ENCODE measurements at regions of chr9 and their contacts with region 1.

Region 1: GRCh38 chr9:128034821-128035764 is 32.0 kb downstream of the NAIF1 start:
- DNase-seq: peak; percentile 89 to 91
- ATAC-seq: peak; percentile 97 to 98
- H3K4me3 ChIP-seq: no peak overlapping the region
- H3K27ac ChIP-seq: peak overlapping the region; percentile 61 to 87
- H3K4me1 ChIP-seq: peaks cover 5% of the 10 kb centered on the region; the same call in 1 of the 3 replicates
- CTCF ChIP-seq: peak; percentile 87
- EP300 ChIP-seq: no peak
- POLR2A ChIP-seq: no peak
- RAD21 ChIP-seq: peak; percentile 97 to 99

Region 2: DNA sequence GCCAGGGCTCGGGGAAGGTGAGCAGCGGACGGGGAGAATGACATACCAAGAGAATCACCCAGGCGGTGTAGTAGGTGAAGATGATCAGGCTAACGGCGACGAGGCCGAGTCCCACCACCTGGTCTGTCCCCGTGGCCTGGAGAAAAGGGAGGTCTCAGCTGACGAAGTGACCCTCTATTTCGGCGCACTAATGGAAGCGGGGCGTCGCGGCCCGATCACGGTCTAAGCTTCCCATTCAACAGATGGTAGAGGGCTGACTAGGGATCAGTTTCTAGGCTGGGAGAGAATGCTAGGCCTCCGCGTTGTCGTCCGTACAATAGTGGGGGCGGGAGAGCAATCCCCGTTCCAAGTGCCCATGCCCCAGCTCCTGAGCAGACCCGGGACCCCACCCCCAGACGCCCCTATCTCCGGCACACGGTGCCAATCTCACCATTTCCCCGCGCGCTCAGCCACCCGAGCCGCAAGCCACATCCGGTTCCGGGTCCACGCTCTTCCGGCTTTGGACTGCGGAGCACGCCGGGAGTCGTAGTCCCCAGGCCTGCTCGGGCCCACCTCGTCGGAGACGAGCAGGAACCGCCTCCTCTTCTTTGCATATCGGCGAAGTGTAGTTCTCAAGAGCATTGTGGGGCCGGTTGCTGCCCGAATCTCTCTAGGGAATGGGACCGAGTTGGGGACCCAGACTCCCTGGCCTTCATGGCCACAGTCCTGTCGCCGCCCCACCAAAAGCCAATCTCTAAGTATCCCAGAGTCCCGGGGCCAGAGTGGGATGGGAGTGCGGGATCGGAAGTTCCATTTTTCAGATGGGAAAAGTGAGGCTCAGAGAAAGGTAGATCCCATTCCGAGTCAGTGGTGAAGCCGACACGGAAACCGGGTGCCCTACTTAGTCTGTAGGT is 97.5 kb before region 1 on chr9 and contains the start of gene DPM2:
- CTCF ChIA-PET with region 1: interaction called, 827 read pairs
- POLR2A ChIA-PET with region 1: interaction called, 3 read pairs
- DNase-seq: peak; percentile 89 to 93
- ATAC-seq: peak; percentile 79 to 91
- H3K4me3 ChIP-seq: peak within 1 kb of the TSS; percentile 61
- H3K27ac ChIP-seq: peak within 1 kb of the TSS; percentile 80 to 92
- H3K4me1 ChIP-seq: peaks cover 34% of the 10 kb centered on the region
- CTCF ChIP-seq: no peak
- EP300 ChIP-seq: no peak
- POLR2A ChIP-seq: peak; percentile 44; the same call in 1 of the 2 replicates
- RAD21 ChIP-seq: no peak
- polyA plus RNA-seq, gene DPM2: 41.9 and 48.8 TPM in 2 replicates

Region 3: GRCh38 chr9:127980706-127981558 is 54.2 kb before region 1 on chr9 and contains the start of gene EEIG1:
- CTCF ChIA-PET with region 1: interaction called, 157 read pairs
- POLR2A ChIA-PET with region 1: interaction called, 3 read pairs
- DNase-seq: peak; percentile 85 to 88
- ATAC-seq: peak; percentile 85 to 94
- H3K4me3 ChIP-seq: peak within 1 kb of the TSS; percentile 91
- H3K27ac ChIP-seq: peak within 1 kb of the TSS; percentile 97 to 98
- H3K4me1 ChIP-seq: peaks cover 44% of the 10 kb centered on the region
- CTCF ChIP-seq: no peak
- EP300 ChIP-seq: no peak
- POLR2A ChIP-seq: peak; percentile 78
- RAD21 ChIP-seq: peak in 1 of 2 experiments; percentile 10; a peak in 1 of 5 replicates
- polyA plus RNA-seq, gene EEIG1: 24.4 and 30.3 TPM in 2 replicates

Region 4: GRCh38 chr9:128001779-128002298 is 33.3 kb before region 1 on chr9:
- CTCF ChIA-PET with region 1: interaction called, 15 read pairs
- POLR2A ChIA-PET with region 1: no interaction called
- DNase-seq: peak; percentile 80 to 96
- ATAC-seq: peak; percentile 94 to 97
- H3K4me3 ChIP-seq: no peak overlapping the region
- H3K27ac ChIP-seq: peak overlapping the region; percentile 90 to 91
- H3K4me1 ChIP-seq: peaks cover 42% of the 10 kb centered on the region
- CTCF ChIP-seq: no peak
- EP300 ChIP-seq: peak; percentile 29 to 53; a peak in 2 of 5 replicates
- POLR2A ChIP-seq: peak; percentile 19; the same call in 1 of the 2 replicates
- RAD21 ChIP-seq: peak in 1 of 2 experiments; percentile 35; a peak in 2 of 5 replicates

Region 5: DNA sequence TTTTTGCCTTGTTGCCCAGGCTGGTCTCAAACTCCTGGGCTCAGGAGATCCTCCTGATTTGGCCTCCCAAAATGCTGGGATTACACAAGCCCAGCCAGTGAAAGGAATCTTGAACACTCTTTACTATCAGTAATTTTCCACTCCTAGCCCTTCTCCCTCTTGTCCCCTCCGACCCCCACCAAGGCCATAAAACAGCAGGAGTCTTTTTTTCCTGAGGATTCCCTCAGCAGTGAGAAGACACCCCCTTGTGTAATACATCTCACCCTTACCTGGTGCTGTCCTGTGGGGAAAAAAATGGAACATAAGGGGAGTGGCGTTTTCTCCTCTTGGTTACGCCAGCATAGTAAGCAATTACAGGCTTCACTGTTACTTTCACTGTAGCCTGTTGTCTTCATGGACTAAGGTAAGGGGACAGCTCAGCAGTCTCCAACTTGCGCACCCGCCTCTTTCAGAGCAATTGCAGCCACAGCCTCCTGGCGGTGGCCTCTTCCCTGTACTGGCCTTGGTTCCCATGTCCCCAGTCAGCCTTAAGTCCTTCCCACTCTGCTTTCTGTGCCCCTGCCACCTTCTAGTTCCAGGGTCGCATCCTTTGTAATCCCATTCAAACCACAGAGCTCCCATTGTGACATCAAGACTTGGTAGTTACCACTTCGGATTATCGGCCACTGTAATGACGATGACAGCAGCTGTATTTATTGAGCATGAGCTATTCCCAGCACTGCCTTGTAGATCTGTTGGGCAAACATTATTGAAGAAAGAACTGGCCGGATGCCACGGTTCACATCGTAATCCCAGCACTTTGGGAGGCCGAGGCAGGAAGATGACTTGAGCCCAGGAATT is 22.0 kb after region 1 on chr9:
- CTCF ChIA-PET with region 1: interaction called, 92 read pairs
- POLR2A ChIA-PET with region 1: no interaction called
- DNase-seq: no peak
- ATAC-seq: peak; percentile 48; a peak in 3 of 6 replicates
- H3K4me3 ChIP-seq: no peak overlapping the region
- H3K27ac ChIP-seq: peak overlapping the region; percentile 25 to 32; a peak in 1 of 6 replicates
- H3K4me1 ChIP-seq: peaks cover 20% of the 10 kb centered on the region
- CTCF ChIP-seq: no peak
- EP300 ChIP-seq: no peak
- POLR2A ChIP-seq: no peak
- RAD21 ChIP-seq: no peak

Region 6: GRCh38 chr9:128088253-128088945 is 53.3 kb after region 1 on chr9:
- CTCF ChIA-PET with region 1: interaction called, 11 read pairs
- POLR2A ChIA-PET with region 1: no interaction called
- DNase-seq: no peak
- ATAC-seq: no peak
- H3K4me3 ChIP-seq: no peak overlapping the region
- H3K27ac ChIP-seq: no peak overlapping the region
- H3K4me1 ChIP-seq: peaks cover 7% of the 10 kb centered on the region; the same call in 2 of the 3 replicates
- CTCF ChIP-seq: no peak
- EP300 ChIP-seq: no peak
- POLR2A ChIP-seq: no peak
- RAD21 ChIP-seq: no peak

Region 7: GRCh38 chr9:128127990-128128835 is 93.1 kb after region 1 on chr9:
- CTCF ChIA-PET with region 1: no interaction called
- POLR2A ChIA-PET with region 1: no interaction called
- DNase-seq: peak; percentile 51 to 93
- ATAC-seq: peak; percentile 71 to 88
- H3K4me3 ChIP-seq: peak overlapping the region; percentile 87
- H3K27ac ChIP-seq: peak overlapping the region; percentile 92 to 99
- H3K4me1 ChIP-seq: peaks cover 29% of the 10 kb centered on the region
- CTCF ChIP-seq: no peak
- EP300 ChIP-seq: no peak
- POLR2A ChIP-seq: peak; percentile 72
- RAD21 ChIP-seq: no peak

Measured in A549 (cell line).